Posterior cingulate gyrus (tissue), 11 donors: ENCODE measurements at regions of chr6 and their contacts with region 1.

Region 1: DNA sequence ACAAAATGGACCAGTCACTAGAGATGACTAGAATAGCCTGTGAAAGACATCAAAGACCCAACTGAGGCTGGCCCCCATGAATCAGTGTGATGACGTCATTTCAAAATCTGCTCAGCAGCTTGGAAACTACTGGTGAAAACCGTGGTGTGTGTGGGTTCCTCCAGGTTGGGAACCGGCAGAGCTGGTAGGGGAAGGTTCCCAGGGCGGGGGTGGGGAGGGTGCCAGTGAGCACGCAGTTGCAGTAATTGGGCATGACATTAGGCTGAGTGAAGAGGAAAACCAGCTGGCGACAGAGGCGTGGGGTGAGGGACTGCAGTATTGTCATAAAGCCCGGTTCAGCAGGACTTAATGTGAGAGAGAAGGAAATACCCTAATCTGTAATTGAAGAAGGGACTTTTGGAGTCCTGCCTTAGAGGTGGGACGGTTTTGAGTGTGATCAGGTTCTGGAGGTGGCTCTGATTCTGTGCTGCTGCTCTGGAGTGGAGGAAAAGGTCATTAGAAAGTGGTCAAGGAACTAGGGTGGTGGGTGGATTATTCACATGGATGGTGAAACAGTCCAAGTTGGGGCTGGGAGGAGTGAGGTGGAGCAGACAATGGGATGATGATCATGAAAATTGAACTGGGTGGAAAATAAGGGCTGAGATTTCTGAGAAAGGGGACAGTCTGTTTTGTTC is 52.0 kb upstream of the MTHFD1L start:
- DNase-seq: peak in 1 of 10 donors; percentile 16

Region 2: DNA sequence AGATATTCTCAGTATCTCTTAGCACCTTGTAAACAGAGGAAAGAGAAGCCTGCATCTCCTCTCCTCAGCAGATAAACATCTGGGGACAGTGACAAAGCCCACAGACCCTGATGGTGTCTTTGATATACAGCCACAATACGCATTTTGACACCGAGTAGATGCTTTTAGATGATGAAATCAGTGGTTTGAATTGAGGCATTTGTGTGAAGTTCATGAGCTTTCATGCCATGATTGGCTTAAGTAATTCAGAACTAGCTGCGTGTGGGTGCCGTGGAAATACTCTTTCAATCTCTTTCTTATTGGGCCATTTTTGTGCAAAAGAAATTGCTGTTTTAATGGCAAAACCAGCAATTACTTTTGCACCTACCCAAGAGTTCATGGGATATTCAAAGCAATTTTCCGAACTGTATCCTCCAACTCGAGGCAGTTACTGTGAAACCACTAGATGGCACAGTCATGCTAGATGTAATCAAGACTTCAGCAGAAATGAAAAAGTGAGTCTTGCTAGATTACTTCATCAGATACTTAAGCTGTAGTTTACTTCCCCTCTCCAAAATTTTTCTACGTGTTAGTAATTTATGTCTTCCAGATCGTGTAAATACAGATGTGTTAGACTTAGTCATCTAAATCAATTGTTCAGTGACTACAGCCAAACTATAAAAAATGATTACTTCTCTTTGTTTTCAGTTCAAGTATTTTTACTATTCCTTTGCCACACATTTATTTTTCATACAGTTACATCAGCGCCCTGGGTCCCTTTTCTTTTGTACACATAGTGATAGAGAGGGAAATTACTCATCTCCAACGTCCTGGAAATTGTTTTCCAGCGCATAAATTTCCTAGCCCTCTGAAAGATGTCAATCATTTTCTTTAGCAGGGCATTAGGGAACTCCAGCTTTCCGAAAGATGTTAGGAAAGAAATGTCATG is 395.3 kb before region 1 on chr6:
- intact Hi-C with region 1: loop called (anchors 1 kb)
- DNase-seq: no peak

Region 3: GRCh38 chr6:150560004-150560883 is 253.2 kb before region 1 on chr6:
- intact Hi-C with region 1: no loop called
- DNase-seq: no peak

Region 4: DNA sequence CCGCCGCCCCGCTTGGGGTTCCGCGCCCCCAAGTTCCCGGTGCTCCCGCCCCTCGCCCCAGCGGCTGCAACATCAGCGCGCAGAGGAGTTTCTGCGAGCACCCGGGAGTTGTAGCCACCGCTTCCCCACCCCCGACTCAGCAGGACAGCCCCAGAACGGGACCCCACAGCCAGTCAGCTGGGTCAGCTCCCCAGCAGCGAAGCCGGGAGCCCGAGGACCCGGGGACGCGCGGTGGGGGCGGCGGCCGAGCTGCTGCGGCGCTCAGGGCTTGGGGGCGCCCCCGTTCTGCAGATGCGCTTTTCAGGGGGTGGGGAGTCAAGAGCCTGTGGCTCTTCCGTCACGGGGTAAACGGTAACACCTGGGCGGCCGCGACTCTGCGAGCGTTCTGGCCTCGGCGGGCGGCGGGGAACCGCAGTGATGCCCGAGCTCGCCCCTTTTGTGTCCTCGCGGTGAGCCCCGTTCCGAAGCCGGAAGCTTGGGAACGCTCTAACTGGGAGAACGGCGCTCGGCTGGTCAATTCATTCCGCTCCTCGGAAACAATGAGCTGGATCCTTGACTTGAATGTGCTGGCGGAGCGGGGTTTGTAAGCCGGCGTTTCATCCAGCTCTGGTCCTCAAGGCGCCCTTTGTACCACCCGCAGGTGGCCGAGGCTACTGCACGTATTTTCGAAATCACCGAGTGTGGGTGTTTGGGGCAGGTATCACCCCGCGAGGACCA is 213.0 kb before region 1 on chr6:
- intact Hi-C with region 1: loop called (anchors 2 kb)
- DNase-seq: peak; percentile 33 to 90 (median 55)

Region 5: GRCh38 chr6:151512481-151512880 is 699.0 kb after region 1 on chr6:
- intact Hi-C with region 1: no loop called
- DNase-seq: no peak